ENCODE measurements at regions of chr6 and their contacts with region 1.

Region 1: GRCh38 chr6:15245361-15246216 is at the start of gene JARID2:
- DNase-seq: peak; percentile 98
- ATAC-seq: peak; percentile 61
- H3K4me3 ChIP-seq: peak within 1 kb of the TSS; percentile 78
- H3K27ac ChIP-seq: peak within 1 kb of the TSS; percentile 62
- H3K4me1 ChIP-seq: peaks cover 16% of the 10 kb centered on the region
- H3K27me3 ChIP-seq: no peaks in the 10 kb centered on the region
- CTCF ChIP-seq: no peak
- total RNA-seq, gene JARID2: 11.0 and 13.1 TPM in 2 replicates

Region 2: DNA sequence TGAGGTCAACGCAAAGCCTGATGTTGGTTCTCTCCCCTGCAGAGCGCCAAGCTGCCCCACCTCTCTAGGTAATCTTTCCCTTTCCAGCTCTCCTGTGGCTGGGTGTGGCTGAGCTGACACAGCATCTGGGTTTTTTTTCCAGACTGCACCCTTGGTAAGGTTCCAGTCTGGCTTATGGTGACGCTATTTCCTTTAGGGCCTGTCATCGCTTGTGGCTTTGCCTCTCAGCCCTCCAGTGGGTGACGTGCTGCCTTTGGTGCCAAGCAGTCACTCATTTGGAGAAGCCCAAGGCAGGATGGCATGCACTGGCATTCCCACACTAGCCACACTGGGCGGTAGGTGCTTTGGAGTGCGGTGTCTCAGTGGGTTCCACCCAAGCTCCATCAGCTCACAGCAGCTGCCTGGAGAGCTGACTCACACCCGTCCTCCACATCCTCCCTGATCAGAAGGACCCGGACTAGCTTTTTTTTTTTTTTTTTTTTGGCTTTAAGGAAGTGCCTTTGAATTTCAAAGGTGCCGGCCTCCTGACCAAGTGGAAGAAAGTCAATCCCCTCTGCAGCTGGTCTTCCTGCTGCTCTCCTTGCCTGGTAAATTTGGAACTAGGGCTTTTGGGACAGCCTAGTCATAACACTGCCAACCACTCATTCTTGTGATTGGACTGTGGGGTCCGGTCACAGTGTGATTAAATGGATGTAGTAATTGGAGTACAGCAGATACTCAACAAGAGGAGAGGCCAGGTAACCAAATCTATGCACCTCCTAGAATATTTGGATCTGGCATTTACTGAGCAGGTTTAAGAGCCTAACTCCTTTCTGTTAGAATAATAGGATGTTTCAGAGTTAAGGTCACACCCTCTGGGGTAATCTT is 974.4 kb before region 1 on chr6:
- CTCF ChIA-PET with region 1: interaction called, 4 read pairs
- POLR2A ChIA-PET with region 1: no interaction called
- intact Hi-C with region 1: loop called (anchors 5 kb)
- DNase-seq: peak; percentile 99
- ATAC-seq: peak; percentile 96
- H3K4me3 ChIP-seq: peak overlapping the region; percentile 44
- H3K27ac ChIP-seq: peak overlapping the region; percentile 100
- H3K4me1 ChIP-seq: peaks cover 38% of the 10 kb centered on the region
- H3K27me3 ChIP-seq: no peaks in the 10 kb centered on the region
- CTCF ChIP-seq: no peak

Region 3: DNA sequence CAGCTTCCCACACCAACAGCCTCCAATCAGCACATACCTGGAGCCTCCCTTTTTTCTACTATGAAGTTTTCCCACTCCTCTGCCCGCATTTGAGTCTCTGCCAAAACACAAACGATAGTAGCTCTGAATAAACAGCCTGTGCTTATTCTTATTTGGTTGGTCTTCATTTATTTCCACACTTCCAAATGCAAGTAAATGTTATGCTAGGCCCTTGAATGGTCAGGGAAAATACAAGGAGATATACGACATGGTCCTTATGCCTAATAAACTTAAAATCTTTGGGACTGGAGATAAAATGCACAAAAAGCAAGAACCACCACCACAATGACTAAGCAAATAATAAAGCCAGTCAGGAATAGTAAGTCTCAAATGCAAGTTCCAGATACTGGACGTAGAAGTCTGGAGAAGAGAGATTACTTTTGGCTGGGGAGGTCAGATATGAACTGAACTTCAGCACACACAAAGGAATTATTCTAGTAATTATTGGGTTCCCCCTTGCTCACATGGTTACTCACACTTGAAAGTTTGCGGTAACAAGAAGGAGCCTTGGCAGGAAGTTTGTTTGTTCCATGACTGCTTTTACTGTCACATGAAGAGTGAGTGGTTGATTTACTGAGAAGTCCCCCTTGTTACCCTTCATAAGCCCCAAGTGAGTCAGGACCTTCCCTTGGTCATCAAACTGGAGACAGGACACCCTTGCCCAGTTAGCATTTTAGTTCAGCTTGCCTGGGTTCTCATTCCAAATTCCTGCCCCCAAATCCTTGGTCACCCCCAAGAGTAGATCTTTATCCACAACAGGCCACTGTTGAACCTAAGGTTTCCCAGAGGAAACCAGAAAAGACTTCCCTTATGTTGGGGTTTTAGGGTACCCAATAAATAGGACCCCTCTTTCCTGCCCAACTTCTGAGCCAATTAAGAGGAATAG is 510.9 kb before region 1 on chr6:
- CTCF ChIA-PET with region 1: no interaction called
- POLR2A ChIA-PET with region 1: no interaction called
- intact Hi-C with region 1: loop called (anchors 5 kb)
- DNase-seq: peak; percentile 98
- ATAC-seq: peak; percentile 48
- H3K4me3 ChIP-seq: peak overlapping the region; percentile 13; the same call in 1 of the 2 replicates
- H3K27ac ChIP-seq: peak overlapping the region; percentile 99
- H3K4me1 ChIP-seq: peaks cover 51% of the 10 kb centered on the region
- H3K27me3 ChIP-seq: no peaks in the 10 kb centered on the region
- CTCF ChIP-seq: no peak

Region 4: GRCh38 chr6:14876778-14877613 is 368.6 kb before region 1 on chr6:
- CTCF ChIA-PET with region 1: no interaction called
- POLR2A ChIA-PET with region 1: interaction called, 6 read pairs
- intact Hi-C with region 1: loop called (anchors 1 kb)
- DNase-seq: peak; percentile 79
- ATAC-seq: peak; percentile 82
- H3K4me3 ChIP-seq: peak overlapping the region; percentile 34; the same call in 1 of the 2 replicates
- H3K27ac ChIP-seq: peak overlapping the region; percentile 96
- H3K4me1 ChIP-seq: peaks cover 32% of the 10 kb centered on the region
- H3K27me3 ChIP-seq: no peaks in the 10 kb centered on the region
- CTCF ChIP-seq: no peak

Region 5: DNA sequence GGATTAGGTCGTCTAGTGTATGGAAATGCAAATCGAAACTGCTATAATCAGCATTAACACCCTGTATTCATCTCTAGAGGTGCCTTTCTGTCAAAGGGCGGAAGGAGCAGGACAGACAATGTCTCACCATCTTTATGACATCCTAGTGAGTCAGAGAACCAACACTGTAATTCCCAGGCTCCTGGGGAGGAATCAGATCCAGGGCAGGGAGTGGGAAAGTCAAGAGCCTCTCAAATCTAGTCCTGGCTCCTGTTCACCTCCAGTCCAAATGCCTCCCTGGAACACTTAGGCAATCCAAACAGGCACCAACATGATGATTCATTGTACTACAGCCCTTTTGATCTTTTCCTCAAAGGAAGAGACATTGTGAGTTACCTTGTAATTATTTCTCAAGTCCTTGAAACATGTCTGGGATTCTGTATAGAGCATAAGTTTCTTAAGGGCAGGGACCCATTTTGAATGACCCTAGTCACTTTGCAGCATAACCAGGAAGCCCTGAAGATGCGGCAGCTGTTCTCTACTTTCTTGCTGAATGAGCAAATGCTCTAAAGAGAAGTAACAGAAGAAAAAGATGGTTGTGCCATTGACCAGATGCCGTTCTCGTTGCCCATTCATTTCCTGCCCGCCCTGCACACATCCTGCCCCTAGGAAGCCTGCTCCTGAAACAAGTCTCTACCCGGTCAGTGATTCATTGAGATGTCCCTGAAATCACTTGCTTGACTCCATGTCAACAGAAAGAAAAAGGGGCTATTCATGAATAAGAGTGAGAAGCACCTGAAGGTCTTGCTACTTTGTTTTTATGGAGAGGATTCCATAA is 112.5 kb before region 1 on chr6:
- CTCF ChIA-PET with region 1: no interaction called
- POLR2A ChIA-PET with region 1: no interaction called
- intact Hi-C with region 1: loop called (anchors 2 kb)
- DNase-seq: peak; percentile 97
- ATAC-seq: peak; percentile 98
- H3K4me3 ChIP-seq: peak overlapping the region; percentile 24; the same call in 1 of the 2 replicates
- H3K27ac ChIP-seq: peak overlapping the region; percentile 92
- H3K4me1 ChIP-seq: peaks cover 23% of the 10 kb centered on the region
- H3K27me3 ChIP-seq: no peaks in the 10 kb centered on the region
- CTCF ChIP-seq: no peak

Region 6: GRCh38 chr6:15232836-15233510 is 12.6 kb before region 1 on chr6:
- CTCF ChIA-PET with region 1: no interaction called
- POLR2A ChIA-PET with region 1: no interaction called
- intact Hi-C with region 1: no loop called
- DNase-seq: no peak
- ATAC-seq: no peak
- H3K4me3 ChIP-seq: no peak overlapping the region
- H3K27ac ChIP-seq: no peak overlapping the region
- H3K4me1 ChIP-seq: no peaks in the 10 kb centered on the region
- H3K27me3 ChIP-seq: no peaks in the 10 kb centered on the region
- CTCF ChIP-seq: no peak

Region 7: GRCh38 chr6:15441215-15441868 is 195.8 kb after region 1 on chr6:
- CTCF ChIA-PET with region 1: no interaction called
- POLR2A ChIA-PET with region 1: no interaction called
- intact Hi-C with region 1: loop called (anchors 1 kb)
- DNase-seq: peak; percentile 83
- ATAC-seq: peak; percentile 65
- H3K4me3 ChIP-seq: no peak overlapping the region
- H3K27ac ChIP-seq: no peak overlapping the region
- H3K4me1 ChIP-seq: peaks cover 21% of the 10 kb centered on the region
- H3K27me3 ChIP-seq: no peaks in the 10 kb centered on the region
- CTCF ChIP-seq: peak; percentile 86

Region 8: DNA sequence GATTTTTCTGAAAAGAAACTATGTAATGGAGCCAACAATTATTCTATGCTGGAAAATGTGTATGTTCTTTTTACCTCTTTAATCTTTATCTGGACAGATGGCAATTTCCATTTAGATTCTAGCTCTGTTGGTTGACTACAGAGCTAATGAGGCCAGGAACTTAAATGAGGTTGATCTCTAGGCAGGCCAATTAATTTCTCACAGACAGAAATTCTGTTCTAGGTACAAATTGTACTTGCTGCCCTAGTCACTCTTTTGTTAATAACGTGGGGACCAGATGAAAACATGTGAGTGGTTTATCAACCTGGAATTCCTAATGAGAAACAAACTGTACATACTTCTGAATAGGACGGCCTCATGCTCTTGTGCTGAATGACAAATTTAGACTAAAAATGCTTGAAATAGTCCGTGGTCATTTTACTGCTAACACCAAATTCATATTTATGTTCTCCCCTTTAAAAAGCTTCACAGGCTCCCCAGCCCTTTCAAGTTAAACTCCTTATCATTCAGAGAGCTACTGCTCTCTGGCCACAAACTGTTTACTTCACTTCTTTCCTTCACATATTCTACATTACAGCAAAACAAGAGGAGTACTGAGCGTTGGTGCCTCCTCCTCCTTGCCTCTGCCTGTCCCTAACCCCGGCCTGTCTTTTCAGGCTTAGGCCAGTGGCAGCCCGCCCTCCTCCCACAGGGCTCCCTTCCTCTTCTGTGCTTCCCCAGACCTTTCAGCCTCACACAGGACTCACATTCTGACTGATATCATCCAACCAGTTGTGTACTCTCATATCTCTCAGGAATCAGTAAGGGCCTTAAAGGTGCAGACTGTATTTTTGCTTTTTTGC is 375.8 kb after region 1 on chr6:
- CTCF ChIA-PET with region 1: no interaction called
- POLR2A ChIA-PET with region 1: no interaction called
- intact Hi-C with region 1: loop called (anchors 10 kb)
- DNase-seq: no peak
- ATAC-seq: no peak
- H3K4me3 ChIP-seq: no peak overlapping the region
- H3K27ac ChIP-seq: no peak overlapping the region
- H3K4me1 ChIP-seq: no peaks in the 10 kb centered on the region
- H3K27me3 ChIP-seq: no peaks in the 10 kb centered on the region
- CTCF ChIP-seq: no peak

Measured in PC-3 (cell line).